AG04450 (cell line): ENCODE measurements at regions of chr10 and their contacts with region 1.

Region 1: GRCh38 chr10:15370856-15371701 is at the start of gene FAM171A1:
- DNase-seq: no peak
- H3K4me3 ChIP-seq: peak within 1 kb of the TSS; percentile 63
- H3K27ac ChIP-seq: no peak within 1 kb of the TSS
- H3K27me3 ChIP-seq: no peaks in the 10 kb centered on the region
- CTCF ChIP-seq: 0 out of 2 replicates have a peak, but pooled peaks have one; percentile 2
- polyA plus RNA-seq, gene FAM171A1: 22.4 and 23.6 TPM in 2 replicates

Region 2: DNA sequence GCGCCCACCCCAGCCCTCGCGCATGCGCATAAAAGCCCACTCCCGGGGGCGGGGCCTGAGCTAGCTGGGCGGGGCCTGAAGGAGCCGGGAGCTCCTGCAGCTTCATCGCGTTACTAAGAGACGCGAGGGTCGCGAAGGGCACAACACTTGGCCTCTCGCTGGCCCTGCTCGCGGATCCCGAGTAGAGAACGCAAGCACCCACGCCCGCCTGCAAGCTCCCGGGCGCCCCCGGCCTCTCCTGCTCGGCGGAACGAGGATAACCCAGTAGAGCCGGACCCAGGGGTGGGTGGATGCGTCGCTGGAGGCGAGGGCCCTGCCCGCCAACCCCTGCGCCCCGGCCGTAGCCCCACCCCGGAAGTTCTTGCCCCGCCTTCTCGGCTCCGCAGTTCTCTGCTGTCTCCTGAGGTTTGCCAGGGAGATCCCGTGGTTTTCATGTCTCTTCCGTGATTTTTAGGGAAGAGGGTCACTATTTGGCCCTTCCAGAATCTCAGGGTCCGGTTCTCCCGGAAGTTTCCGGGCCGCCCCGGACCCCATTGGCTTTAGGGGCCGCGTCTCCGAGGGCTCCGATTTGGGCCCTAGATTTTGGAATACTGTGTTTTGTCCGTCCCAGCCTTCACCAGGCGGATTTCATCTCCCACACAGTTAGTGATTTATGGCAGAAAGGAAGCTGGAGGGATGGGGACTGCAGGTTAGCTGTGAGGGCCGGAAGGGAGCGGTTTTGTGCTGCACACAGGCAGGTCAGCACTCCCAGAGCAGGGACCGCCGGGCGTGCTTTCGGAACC is 411.6 kb before region 1 on chr10 and contains the start of gene MEIG1:
- CTCF ChIA-PET with region 1: interaction called, 10 read pairs
- POLR2A ChIA-PET with region 1: no interaction called
- DNase-seq: peak; percentile 83
- H3K4me3 ChIP-seq: peak within 1 kb of the TSS; percentile 87
- H3K27ac ChIP-seq: peak within 1 kb of the TSS; percentile 97
- H3K27me3 ChIP-seq: no peaks in the 10 kb centered on the region
- CTCF ChIP-seq: no peak
- polyA plus RNA-seq, gene MEIG1: 0.21 TPM in 1 of 2 replicates, not detected in the other

Region 3: DNA sequence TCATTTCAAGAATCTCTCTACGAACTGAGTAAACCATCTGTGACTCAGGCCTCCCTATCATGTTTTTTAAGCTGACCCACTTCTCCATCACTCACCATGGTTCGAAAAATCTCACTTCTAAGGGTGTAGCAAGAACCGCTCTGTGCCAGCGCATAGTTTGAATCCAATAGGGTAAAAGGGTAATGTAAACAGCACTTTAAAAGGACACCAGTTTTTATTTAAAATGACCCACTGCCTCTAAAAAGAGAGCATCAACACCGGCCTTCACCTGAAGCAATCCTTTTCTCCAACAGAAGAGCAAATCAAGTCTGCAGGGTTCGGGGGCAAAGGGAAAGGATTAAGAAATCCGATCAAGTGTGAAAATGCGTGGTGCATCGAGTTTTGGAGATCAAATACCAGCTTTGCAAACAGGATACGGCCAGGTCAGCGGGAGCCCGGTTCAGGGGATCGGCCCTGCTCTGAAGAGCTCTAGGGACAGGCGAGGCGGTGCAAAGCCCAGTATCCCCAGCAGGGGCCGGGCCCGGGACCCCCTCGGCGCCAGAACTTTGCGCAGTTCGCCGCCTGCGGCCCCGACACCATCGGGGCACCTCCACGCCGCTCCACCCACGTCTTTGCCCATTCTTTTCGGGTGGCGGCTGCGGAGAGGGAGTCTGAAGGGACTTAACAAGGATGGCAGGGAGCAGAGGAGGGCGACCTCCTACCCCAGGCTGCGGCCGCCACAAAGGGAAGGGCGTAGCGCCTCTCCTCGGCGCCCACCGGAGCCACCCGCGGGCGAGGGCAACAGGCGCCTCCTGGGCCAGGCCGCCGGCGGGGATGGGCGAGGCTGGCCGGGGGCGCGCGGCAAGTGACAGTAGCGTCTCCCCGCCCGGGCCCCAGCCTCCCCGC is 203.4 kb before region 1 on chr10:
- CTCF ChIA-PET with region 1: interaction called, 12 read pairs
- POLR2A ChIA-PET with region 1: interaction called, 7 read pairs
- DNase-seq: no peak
- H3K4me3 ChIP-seq: peak overlapping the region; percentile 88
- H3K27ac ChIP-seq: peak overlapping the region; percentile 31
- H3K27me3 ChIP-seq: no peaks in the 10 kb centered on the region
- CTCF ChIP-seq: peak; percentile 67